GM10248 (cell line): ENCODE measurements at regions of chr1 and their contacts with region 1.

Region 1: GRCh38 chr1:28877132-28877781 is 37.1 kb upstream of the EPB41 start:
- DNase-seq: peak; percentile 79
- CTCF ChIP-seq: peak; percentile 86

Region 2: GRCh38 chr1:28359592-28360239 is 517.5 kb before region 1 on chr1:
- CTCF ChIA-PET with region 1: interaction called, 23 read pairs
- POLR2A ChIA-PET with region 1: no interaction called
- DNase-seq: peak; percentile 69
- CTCF ChIP-seq: peak; percentile 57

Region 3: DNA sequence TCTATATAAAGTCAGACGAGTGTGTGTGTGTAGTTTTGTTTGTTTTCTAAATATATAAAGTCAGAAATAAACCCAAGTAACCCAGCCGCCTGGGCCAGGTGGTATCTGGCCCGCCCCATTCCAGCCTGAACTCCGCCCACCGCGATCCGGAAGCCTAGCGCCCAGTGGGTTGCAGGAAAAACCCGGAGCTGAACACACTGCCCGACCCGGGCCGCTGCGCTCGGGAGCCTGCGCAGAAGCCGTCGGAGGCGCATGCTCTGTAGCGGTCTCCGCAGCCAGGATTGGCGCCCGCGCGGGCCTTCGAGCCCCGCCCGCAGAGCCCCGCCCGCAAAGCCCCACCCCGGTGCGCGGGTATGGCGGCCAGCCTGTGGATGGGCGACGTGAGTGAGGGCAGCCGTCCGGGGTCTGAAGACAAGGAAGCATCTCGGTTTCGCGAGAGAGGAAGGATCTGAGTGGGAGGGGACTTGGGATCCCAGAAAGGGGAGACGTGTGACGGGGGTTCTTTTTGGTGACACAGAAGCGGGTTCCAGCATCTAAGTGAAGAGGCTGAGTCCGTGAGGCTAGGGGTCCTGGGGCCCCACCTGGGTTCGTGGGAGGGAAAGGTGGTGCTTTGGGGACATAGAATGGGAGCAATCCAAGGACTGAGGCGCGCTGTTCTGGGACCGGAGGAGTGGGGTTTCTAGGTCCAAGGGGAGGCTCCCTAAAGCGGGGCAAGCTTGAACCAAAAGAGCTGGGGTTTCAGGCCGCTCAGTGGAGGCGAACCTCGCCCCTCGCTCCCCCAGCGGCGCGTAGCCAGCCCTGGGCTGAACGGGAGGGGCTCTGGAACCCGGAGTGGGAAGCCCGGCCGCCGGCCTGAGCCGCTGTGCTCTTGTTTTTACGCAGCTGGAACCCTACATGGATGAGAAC is 324.2 kb before region 1 on chr1 and contains the start of gene TRNAU1AP:
- CTCF ChIA-PET with region 1: no interaction called
- POLR2A ChIA-PET with region 1: no interaction called
- DNase-seq: peak; percentile 97
- CTCF ChIP-seq: peak; percentile 0

Region 4: GRCh38 chr1:28736450-28737306 is 140.6 kb before region 1 on chr1 and contains the start of gene YTHDF2:
- CTCF ChIA-PET with region 1: interaction called, 12 read pairs
- POLR2A ChIA-PET with region 1: no interaction called
- DNase-seq: peak; percentile 96
- CTCF ChIP-seq: peak; percentile 92

Region 5: GRCh38 chr1:28792644-28793121 is 84.6 kb before region 1 on chr1:
- CTCF ChIA-PET with region 1: interaction called, 127 read pairs
- POLR2A ChIA-PET with region 1: no interaction called
- DNase-seq: no peak
- CTCF ChIP-seq: no peak

Region 6: GRCh38 chr1:28893403-28894102 is 16.3 kb after region 1 on chr1:
- CTCF ChIA-PET with region 1: interaction called, 29 read pairs
- POLR2A ChIA-PET with region 1: no interaction called
- DNase-seq: no peak
- CTCF ChIP-seq: no peak

Region 7: DNA sequence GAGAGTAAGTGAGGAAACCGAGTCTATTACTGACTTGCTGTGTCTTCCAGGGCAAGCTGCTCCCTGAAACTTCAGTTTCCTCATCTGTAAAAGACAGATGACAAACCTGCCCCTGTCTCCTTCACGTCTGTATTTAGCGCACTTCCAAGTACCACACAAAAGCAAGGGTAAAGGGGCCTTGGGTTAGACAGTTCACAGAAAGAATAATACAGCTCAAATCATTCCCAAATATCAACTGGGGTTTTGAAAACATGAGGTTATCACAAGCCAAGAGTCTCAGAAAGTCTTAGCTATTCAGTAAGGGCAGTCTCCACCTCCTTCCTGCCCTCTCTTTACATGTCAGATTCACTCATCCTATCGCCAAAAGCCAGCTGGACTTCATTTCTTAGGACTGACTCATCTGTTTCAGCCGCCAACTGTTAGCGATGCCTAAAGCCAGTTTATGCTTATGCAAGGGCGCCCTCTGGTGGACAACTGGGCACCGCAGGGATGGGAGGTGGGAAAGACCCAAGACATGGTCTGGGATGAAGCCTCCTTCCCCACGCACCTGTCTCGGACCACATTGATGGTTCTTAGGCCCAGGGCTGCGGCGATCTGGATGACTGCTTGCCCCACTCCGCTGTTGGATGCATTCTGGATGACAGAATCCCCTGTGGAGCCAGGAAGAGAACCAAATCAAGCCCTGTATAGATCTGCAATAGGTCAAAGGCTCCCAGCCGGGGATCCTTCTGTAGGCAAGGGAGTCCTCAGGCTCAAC is 325.5 kb after region 1 on chr1:
- CTCF ChIA-PET with region 1: interaction called, 72 read pairs
- POLR2A ChIA-PET with region 1: no interaction called
- DNase-seq: peak; percentile 87
- CTCF ChIP-seq: peak; percentile 96

Region 8: GRCh38 chr1:29436181-29436785 is 559.0 kb after region 1 on chr1:
- CTCF ChIA-PET with region 1: no interaction called
- POLR2A ChIA-PET with region 1: no interaction called
- DNase-seq: no peak
- CTCF ChIP-seq: no peak